PC-9 (cell line): ENCODE measurements at regions of chr17 and their contacts with region 1.

Region 1: DNA sequence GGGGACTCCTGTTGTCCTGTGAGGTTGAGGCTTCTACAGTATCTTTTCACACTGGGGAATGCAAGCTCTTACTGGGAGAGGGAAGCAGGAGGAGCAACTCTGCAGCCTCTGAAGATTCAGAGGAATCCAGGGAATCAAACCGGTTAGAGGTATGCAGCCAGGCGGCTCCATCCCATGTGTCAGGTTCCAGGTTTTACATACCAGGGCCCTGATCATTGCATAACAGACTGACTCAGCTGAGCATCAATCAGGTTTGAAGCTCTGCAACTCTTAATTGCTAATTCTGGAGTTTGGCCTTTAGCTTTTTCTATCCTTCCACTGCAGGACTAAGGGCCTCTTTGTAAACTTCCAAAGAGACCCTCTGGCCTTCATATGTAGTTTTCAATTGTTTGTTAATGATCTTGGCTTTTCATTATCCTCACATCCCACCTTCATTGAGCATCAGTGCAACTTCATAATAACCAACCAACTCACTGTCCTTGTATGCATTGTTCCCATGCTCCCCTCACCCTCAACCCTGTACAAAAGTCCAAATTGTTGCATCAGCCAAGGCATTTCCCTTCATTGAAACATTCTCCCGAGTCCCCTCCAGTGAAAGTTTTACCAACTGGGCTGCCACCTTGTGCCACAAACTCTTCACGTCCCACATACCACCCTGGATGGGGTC is 59.7 kb upstream of the DHX40 start:
- DNase-seq: peak; percentile 66 to 92
- H3K4me3 ChIP-seq: no peak overlapping the region
- H3K27ac ChIP-seq: no peak overlapping the region
- H3K4me1 ChIP-seq: peaks cover 12% of the 10 kb centered on the region
- H3K27me3 ChIP-seq: no peaks in the 10 kb centered on the region
- CTCF ChIP-seq: no peak

Region 2: GRCh38 chr17:59372138-59372857 is 133.4 kb before region 1 on chr17:
- CTCF ChIA-PET with region 1: no interaction called
- POLR2A ChIA-PET with region 1: no interaction called
- intact Hi-C with region 1: no loop called
- DNase-seq: peak; percentile 35 to 68
- H3K4me3 ChIP-seq: no peak overlapping the region
- H3K27ac ChIP-seq: peak overlapping the region; percentile 16
- H3K4me1 ChIP-seq: peaks cover 42% of the 10 kb centered on the region
- H3K27me3 ChIP-seq: no peaks in the 10 kb centered on the region
- CTCF ChIP-seq: no peak

Region 3: DNA sequence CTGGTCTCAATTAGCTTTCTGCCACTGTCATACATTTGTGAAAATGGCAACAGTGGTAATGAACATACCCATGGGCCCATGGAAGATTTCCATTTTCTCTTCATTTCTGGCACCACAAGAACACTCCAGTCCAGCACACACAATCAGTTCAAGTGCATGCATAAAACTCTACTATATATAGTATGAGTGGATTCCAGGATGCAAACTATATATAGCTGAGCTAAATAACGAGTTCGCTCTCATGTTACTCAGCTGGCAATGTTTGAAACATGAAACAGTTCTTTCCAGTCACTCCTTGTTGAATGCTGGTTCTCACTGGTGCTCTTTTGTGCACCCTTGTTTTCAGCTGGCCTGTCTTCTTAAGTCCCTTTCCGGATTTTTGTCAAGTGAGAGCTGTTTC is 15.5 kb before region 1 on chr17:
- CTCF ChIA-PET with region 1: no interaction called
- POLR2A ChIA-PET with region 1: interaction called, 21 read pairs
- intact Hi-C with region 1: no loop called
- DNase-seq: no peak
- H3K4me3 ChIP-seq: no peak overlapping the region
- H3K27ac ChIP-seq: no peak overlapping the region
- H3K4me1 ChIP-seq: peaks cover 16% of the 10 kb centered on the region
- H3K27me3 ChIP-seq: no peaks in the 10 kb centered on the region
- CTCF ChIP-seq: no peak

Region 4: DNA sequence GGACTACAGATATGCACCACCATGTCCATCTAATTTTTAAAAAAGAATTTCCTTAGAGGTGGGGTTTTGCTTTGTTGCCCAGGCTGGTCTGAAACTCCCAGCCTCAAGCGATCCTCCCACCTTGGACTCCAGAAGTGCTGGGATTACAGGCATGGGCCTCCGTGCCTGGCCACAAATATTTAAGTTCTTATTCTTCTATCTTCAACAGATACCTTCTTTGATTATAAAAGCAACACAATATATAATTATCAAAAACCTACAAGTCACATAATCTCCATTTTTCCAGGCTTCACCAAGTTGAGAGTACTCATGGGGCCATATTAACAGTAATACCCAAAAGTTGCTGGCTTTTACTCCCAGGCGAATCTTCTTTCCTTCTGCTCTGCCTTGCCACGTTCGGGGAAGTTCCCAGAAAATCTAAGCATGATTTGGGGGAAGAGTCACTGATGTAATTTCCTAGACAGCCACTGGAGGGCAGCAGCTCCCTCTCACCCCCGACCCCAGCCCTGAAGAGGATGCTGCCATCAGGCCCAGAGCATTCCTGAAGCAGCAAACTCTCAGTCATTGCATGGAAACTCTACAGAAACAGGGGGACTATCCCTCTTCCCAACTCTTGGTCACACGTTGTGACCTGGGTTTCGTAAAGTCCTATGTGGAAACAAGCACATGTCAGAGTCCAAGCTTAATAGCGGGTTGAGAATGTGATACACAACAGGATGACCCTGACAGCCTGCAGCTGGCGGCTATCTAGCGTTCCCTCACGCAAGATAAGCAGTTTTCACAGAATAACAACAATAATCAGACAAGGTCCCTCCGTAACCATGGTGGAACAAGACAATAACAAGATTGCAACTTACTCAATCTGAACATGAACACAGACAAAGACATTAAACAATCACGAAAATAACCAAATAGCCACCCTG is 15.7 kb after region 1 on chr17:
- CTCF ChIA-PET with region 1: interaction called, 3 read pairs
- POLR2A ChIA-PET with region 1: interaction called, 13 read pairs
- intact Hi-C with region 1: no loop called
- DNase-seq: peak in 1 of 2 experiments; percentile 59
- H3K4me3 ChIP-seq: no peak overlapping the region
- H3K27ac ChIP-seq: no peak overlapping the region
- H3K4me1 ChIP-seq: peaks cover 5% of the 10 kb centered on the region; the same call in 1 of the 2 replicates
- H3K27me3 ChIP-seq: no peaks in the 10 kb centered on the region
- CTCF ChIP-seq: peak; percentile 97

Region 5: DNA sequence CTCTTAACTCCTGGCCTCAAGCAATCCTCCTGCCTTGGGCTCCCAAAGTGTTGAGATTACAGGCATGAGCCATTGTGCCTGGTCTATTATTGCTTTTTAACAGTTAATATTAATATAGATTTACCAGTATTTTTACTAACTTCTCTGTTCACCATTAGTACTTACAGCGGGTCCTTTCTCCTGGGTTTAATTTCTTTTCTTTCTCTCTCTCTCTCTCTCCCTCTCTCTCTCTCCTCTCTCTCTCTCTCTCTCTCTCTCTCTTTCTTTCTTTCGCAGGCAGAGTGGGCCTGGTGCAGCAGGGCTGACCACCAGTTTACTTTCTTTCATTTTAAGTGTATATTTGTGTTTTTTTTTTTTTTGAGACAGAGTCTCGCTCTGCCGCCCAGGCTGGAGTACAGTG is 45.0 kb after region 1 on chr17:
- CTCF ChIA-PET with region 1: no interaction called
- POLR2A ChIA-PET with region 1: no interaction called
- intact Hi-C with region 1: no loop called
- DNase-seq: no peak
- H3K4me3 ChIP-seq: no peak overlapping the region
- H3K27ac ChIP-seq: no peak overlapping the region
- H3K4me1 ChIP-seq: no peaks in the 10 kb centered on the region
- H3K27me3 ChIP-seq: no peaks in the 10 kb centered on the region
- CTCF ChIP-seq: no peak